ENCODE measurements at regions of chr20 and their contacts with region 1.

Region 1: GRCh38 chr20:35954200-35954906 is at the start of gene SCAND1:
- DNase-seq: peak; percentile 96
- ATAC-seq: peak; percentile 96
- H3K4me3 Mint-ChIP-seq: peak within 1 kb of the TSS; percentile 98
- H3K27ac Mint-ChIP-seq: peak within 1 kb of the TSS; percentile 99
- H3K4me1 Mint-ChIP-seq: peaks cover 10% of the 10 kb centered on the region
- H3K27me3 Mint-ChIP-seq: peaks cover 3% of the 10 kb centered on the region
- CTCF ChIP-seq: peak; percentile 45
- total RNA-seq, gene SCAND1: 94.2 to 103 TPM (median 94.6 TPM) in 3 replicates

Region 2: DNA sequence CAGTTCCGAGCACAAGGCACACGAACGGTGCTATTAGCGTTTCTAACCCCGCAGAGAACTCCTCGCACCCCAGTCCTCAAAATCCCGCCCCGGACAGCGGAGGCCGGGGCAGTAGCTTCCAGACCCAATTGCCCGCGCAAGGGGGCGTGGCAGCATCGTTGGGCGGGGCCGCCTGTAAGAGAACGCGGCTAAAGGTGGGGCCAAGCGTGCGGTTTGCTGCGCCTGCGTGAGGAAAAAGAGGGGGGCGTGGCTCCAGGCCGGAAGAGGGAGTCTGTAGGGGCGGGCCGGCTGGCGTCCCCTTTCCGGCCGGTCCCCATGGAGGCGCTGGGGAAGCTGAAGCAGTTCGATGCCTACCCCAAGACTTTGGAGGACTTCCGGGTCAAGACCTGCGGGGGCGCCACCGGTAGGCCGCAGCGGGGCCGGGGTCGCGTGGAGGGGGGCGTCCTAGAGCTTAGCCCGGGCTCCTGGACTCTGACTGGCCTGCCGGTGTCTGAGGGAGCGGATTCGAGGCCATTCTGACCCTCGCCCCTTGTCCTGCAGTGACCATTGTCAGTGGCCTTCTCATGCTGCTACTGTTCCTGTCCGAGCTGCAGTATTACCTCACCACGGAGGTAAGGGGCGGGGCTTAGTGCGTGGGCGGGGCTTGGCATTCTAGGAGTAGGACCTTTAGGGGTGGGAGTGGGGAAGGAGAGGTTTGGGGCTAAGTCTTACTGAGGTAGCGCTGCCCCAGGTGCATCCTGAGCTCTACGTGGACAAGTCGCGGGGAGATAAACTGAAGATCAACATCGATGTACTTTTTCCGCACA is 412.4 kb before region 1 on chr20 and contains the start of gene ERGIC3:
- CTCF ChIA-PET with region 1: interaction called, 14 read pairs
- POLR2A ChIA-PET with region 1: interaction called, 5 read pairs
- DNase-seq: peak; percentile 100
- ATAC-seq: peak; percentile 85
- H3K4me3 Mint-ChIP-seq: peak within 1 kb of the TSS; percentile 83
- H3K27ac Mint-ChIP-seq: peak within 1 kb of the TSS; percentile 88
- H3K4me1 Mint-ChIP-seq: peaks cover 16% of the 10 kb centered on the region
- H3K27me3 Mint-ChIP-seq: no peaks in the 10 kb centered on the region; the same call in 1 of the 2 replicates
- CTCF ChIP-seq: no peak
- total RNA-seq, gene ERGIC3: 168 to 181 TPM (median 179 TPM) in 3 replicates

Region 3: DNA sequence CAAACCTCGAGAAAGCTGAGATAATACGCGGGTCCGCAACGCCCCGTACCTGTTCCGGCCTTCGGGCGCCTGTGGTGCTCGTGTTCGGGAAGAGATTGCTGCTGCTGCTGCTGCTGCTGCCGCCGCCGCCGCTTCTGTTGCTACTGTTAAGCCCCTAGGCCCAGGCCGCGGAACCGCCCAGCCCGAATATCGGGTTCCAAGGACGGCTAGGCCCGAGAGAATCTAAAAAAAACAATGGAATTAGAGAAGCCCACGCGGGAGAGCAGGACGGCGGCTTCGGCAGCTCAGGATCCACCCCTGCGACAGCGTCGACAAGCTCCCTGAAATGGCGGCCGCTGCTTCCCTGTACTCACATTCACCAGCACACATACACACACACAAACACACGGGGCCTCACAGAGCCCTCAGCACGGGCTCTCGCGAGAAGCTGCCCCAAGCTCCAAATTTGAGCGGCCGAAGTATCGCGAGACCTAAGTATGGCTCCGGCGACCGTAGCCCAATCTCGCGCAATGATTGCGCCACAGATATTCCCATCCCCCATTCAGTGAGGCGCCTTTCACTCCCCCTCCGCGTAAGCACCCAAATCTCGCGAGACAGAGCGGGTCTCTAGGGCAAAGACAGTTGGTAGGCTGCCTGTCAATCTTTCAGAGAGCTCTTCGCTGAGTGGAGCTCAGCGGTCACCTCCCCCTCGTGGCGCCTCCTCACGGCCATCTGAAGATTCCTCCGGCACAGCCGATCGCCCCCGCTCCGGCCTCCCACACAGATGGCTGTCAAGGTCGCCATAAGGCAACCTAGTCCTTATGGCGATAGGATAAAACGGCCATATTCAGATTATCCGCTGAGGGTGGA is 212.2 kb before region 1 on chr20 and contains the start of gene RBM39:
- CTCF ChIA-PET with region 1: interaction called, 20 read pairs
- POLR2A ChIA-PET with region 1: interaction called, 30 read pairs
- DNase-seq: peak; percentile 99
- ATAC-seq: peak; percentile 94
- H3K4me3 Mint-ChIP-seq: peak within 1 kb of the TSS; percentile 98
- H3K27ac Mint-ChIP-seq: peak within 1 kb of the TSS; percentile 100
- H3K4me1 Mint-ChIP-seq: peaks cover 29% of the 10 kb centered on the region
- H3K27me3 Mint-ChIP-seq: no peaks in the 10 kb centered on the region
- CTCF ChIP-seq: no peak
- total RNA-seq, gene RBM39: 221 to 231 TPM (median 223 TPM) in 3 replicates

Region 4: GRCh38 chr20:35816339-35816738 is 138.0 kb before region 1 on chr20:
- CTCF ChIA-PET with region 1: no interaction called
- POLR2A ChIA-PET with region 1: no interaction called
- DNase-seq: no peak
- ATAC-seq: no peak
- H3K4me3 Mint-ChIP-seq: no peak overlapping the region
- H3K27ac Mint-ChIP-seq: no peak overlapping the region
- H3K4me1 Mint-ChIP-seq: no peaks in the 10 kb centered on the region
- H3K27me3 Mint-ChIP-seq: no peaks in the 10 kb centered on the region; the same call in 1 of the 2 replicates
- CTCF ChIP-seq: no peak

Region 5: GRCh38 chr20:35934050-35934449 is 20.3 kb before region 1 on chr20:
- CTCF ChIA-PET with region 1: interaction called, 15 read pairs
- POLR2A ChIA-PET with region 1: interaction called, 5 read pairs
- DNase-seq: peak; percentile 18
- ATAC-seq: peak; percentile 93
- H3K4me3 Mint-ChIP-seq: no peak overlapping the region
- H3K27ac Mint-ChIP-seq: peak overlapping the region; percentile 95
- H3K4me1 Mint-ChIP-seq: peaks cover 23% of the 10 kb centered on the region
- H3K27me3 Mint-ChIP-seq: no peaks in the 10 kb centered on the region
- CTCF ChIP-seq: no peak

Region 6: DNA sequence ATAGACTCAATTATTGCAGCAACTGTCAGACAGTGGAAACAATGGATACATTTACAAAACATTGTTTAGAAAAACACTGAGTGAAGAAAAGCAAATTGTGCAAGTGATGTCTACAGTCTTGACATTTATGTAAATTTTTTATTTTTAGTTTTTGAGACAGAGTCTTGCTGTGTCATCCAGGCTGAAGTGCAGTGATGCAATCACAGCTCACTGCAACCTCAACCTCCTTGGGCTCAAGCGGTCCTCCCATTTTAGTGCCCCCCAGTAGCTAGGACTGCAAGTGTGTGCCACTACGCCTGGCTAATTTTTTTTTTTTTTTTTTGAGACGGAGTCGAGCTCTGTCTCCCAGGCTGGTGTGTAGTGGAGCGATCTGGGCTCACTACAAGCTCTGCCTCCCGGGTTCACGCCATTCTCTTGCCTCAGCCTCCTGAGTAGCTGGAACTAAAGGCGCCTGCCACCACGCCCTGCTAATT is 23.7 kb after region 1 on chr20:
- CTCF ChIA-PET with region 1: interaction called, 20 read pairs
- POLR2A ChIA-PET with region 1: interaction called, 5 read pairs
- DNase-seq: no peak
- ATAC-seq: no peak
- H3K4me3 Mint-ChIP-seq: no peak overlapping the region
- H3K27ac Mint-ChIP-seq: no peak overlapping the region
- H3K4me1 Mint-ChIP-seq: no peaks in the 10 kb centered on the region
- H3K27me3 Mint-ChIP-seq: no peaks in the 10 kb centered on the region; the same call in 1 of the 2 replicates
- CTCF ChIP-seq: no peak

Region 7: GRCh38 chr20:36098364-36098763 is 144.0 kb after region 1 on chr20:
- CTCF ChIA-PET with region 1: interaction called, 13 read pairs
- POLR2A ChIA-PET with region 1: no interaction called
- DNase-seq: no peak
- ATAC-seq: no peak
- H3K4me3 Mint-ChIP-seq: no peak overlapping the region
- H3K27ac Mint-ChIP-seq: no peak overlapping the region
- H3K4me1 Mint-ChIP-seq: peaks cover 28% of the 10 kb centered on the region
- H3K27me3 Mint-ChIP-seq: peaks cover 100% of the 10 kb centered on the region
- CTCF ChIP-seq: no peak